ENCODE measurements at regions of chr16 and their contacts with region 1.

Region 1: DNA sequence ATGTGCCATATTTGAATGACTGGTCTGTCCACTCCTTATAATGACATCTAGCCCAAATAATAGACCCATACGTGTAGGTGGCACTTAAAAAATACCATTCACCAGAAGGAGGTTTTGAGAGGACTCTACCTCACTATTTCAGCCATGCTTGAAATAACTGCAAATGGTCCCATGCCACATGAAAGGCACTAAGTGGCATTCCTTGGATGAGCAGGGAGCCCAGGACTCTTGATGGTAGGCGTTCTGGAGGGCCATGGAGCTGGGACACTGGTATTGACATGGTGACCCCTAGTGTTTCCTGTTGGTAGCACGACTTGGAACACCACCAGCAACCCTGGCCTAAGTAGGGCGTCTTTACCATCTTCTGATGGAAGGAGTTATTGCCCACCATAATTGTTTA is 148.7 kb upstream of the ZFHX3 start:
- DNase-seq: peak; percentile 24
- ATAC-seq: peak; percentile 98
- H3K4me3 ChIP-seq: no peak overlapping the region
- H3K27ac ChIP-seq: no peak overlapping the region
- H3K4me1 ChIP-seq: no peaks in the 10 kb centered on the region
- H3K27me3 ChIP-seq: no peaks in the 10 kb centered on the region
- CTCF ChIP-seq: peak; percentile 63 to 82 (median 78)
- EP300 ChIP-seq: no peak
- POLR2A ChIP-seq: no peak
- RAD21 ChIP-seq: peak; percentile 78

Region 2: DNA sequence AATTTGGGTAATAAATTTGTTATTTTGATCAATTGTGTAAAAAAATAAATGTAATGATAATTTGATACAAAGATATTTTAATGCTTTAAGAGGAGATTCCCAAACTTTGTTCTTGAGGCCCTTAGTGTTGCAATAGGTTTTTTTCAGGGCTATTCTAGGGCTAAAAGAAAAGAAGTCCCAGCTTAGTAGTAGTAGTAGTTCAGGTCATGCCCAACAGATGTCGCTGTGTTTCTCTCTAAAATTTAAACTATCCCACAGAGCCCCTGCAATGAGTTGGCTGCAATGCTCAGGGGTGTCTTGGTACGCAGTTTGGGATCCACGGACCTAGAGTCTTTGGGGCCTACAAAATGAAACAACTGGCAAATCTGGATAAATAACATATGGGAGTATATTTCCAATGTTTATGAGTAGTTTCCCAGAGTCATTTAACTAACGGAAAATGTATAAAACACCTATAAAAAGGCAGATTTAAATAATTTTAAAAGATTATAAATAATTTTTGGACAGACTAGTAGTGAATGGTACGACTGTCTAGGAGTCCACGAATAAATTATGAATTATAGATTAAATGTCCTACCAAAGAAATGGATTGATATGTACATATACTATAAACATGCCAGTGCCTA is 796.3 kb before region 1 on chr16:
- CTCF ChIA-PET with region 1: no interaction called
- POLR2A ChIA-PET with region 1: no interaction called
- RAD21 ChIA-PET with region 1: no interaction called
- SMC1A ChIA-PET with region 1: no interaction called
- in situ Hi-C with region 1: no loop called
- intact Hi-C with region 1: loop called (anchors 10 kb)
- DNase-seq: peak; percentile 7
- ATAC-seq: peak; percentile 88
- H3K4me3 ChIP-seq: no peak overlapping the region
- H3K27ac ChIP-seq: no peak overlapping the region
- H3K4me1 ChIP-seq: no peaks in the 10 kb centered on the region
- H3K27me3 ChIP-seq: no peaks in the 10 kb centered on the region
- CTCF ChIP-seq: peak; percentile 57 to 75 (median 67)
- EP300 ChIP-seq: no peak
- POLR2A ChIP-seq: no peak
- RAD21 ChIP-seq: peak; percentile 54; the same call in 1 of the 2 replicates

Region 3: DNA sequence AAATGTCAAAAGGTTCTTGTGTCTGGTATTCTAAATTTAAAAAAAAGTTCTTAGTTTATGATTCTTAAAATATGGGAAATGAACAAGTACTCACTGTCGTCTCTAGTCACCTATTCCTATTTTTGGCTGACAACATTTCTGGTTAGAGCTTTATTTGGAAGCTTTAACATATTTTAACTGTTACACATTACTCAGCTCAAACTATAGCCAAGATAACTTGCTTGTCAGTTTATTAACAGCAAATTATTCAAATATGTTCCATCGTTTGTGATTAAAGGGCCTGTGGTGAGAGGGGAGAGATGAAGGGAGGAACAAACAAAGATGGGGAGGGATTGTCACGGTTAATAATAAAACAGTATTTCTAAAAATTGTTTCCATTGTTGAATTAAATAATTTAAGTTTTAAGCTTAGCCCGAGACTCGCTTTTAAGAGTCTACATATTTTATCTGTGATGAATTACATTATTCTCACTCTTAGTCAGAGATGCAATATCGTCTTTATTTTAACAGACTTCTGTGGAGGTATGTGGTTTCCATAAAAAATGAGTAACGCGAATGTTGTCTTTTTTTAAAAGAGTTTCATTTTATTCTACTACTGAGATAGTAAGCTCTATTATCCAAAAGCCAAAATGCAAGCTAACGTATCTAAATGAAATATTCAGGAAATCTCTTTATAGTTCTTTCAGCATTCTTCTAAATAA is 702.8 kb before region 1 on chr16:
- CTCF ChIA-PET with region 1: no interaction called
- POLR2A ChIA-PET with region 1: no interaction called
- RAD21 ChIA-PET with region 1: no interaction called
- SMC1A ChIA-PET with region 1: no interaction called
- in situ Hi-C with region 1: loop called (anchors 10 kb)
- intact Hi-C with region 1: no loop called
- DNase-seq: no peak
- ATAC-seq: no peak
- H3K4me3 ChIP-seq: no peak overlapping the region
- H3K27ac ChIP-seq: no peak overlapping the region
- H3K4me1 ChIP-seq: no peaks in the 10 kb centered on the region
- H3K27me3 ChIP-seq: no peaks in the 10 kb centered on the region
- CTCF ChIP-seq: no peak
- EP300 ChIP-seq: no peak
- POLR2A ChIP-seq: no peak
- RAD21 ChIP-seq: no peak

Region 4: GRCh38 chr16:72989579-72990551 is 206.8 kb before region 1 on chr16:
- CTCF ChIA-PET with region 1: no interaction called
- POLR2A ChIA-PET with region 1: no interaction called
- RAD21 ChIA-PET with region 1: no interaction called
- SMC1A ChIA-PET with region 1: no interaction called
- in situ Hi-C with region 1: no loop called
- intact Hi-C with region 1: no loop called
- DNase-seq: no peak
- ATAC-seq: no peak
- H3K4me3 ChIP-seq: no peak overlapping the region
- H3K27ac ChIP-seq: no peak overlapping the region
- H3K4me1 ChIP-seq: no peaks in the 10 kb centered on the region
- H3K27me3 ChIP-seq: no peaks in the 10 kb centered on the region
- CTCF ChIP-seq: no peak
- EP300 ChIP-seq: no peak
- POLR2A ChIP-seq: no peak
- RAD21 ChIP-seq: no peak

Measured in GM12878 (cell line).